GM12878 (cell line): ENCODE measurements at regions of chr10 and their contacts with region 1.

Region 1: DNA sequence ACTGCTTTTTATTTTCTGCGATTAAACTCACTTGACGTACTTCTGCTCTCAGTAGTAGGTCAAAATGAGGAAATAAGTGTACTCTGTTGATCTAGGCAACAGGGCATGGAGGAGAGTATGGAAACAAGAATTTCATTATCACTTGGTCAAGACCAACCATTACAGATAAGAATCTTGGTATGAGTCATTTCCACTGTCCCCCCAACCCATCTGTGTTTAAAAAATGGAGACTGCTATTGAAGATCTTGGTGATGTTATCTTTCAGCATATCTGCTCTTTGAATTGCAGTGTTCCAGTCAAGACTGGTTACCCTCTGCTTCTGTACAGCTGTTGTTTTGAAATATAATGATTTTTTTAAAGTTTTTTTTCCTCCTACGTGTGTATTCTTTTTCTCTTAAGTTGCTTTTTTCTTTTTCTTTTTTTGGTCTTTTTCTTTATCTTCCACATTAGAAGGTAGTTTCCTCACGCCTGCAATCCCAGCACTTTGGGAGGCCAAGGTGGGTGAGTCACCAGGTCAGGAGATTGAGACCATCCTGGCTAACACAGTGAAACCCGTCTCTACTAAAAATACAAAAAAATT is 11.7 kb downstream of the STAM start:
- DNase-seq: peak; percentile 64
- ATAC-seq: peak; percentile 92
- H3K4me3 ChIP-seq: no peak overlapping the region; the same call in 1 of the 2 replicates
- H3K27ac ChIP-seq: peak overlapping the region; percentile 49
- H3K4me1 ChIP-seq: peaks cover 11% of the 10 kb centered on the region; the same call in 1 of the 2 replicates
- H3K27me3 ChIP-seq: no peaks in the 10 kb centered on the region
- CTCF ChIP-seq: no peak
- EP300 ChIP-seq: peak; percentile 59 to 76; a peak in 2 of 4 replicates
- POLR2A ChIP-seq: no peak
- RAD21 ChIP-seq: no peak

Region 2: GRCh38 chr10:17023386-17024298 is 632.0 kb before region 1 on chr10:
- CTCF ChIA-PET with region 1: no interaction called
- POLR2A ChIA-PET with region 1: no interaction called
- RAD21 ChIA-PET with region 1: no interaction called
- SMC1A ChIA-PET with region 1: no interaction called
- in situ Hi-C with region 1: no loop called
- intact Hi-C with region 1: no loop called
- DNase-seq: peak; percentile 69
- ATAC-seq: peak; percentile 94
- H3K4me3 ChIP-seq: peak overlapping the region; percentile 12; the same call in 1 of the 2 replicates
- H3K27ac ChIP-seq: no peak overlapping the region
- H3K4me1 ChIP-seq: no peaks in the 10 kb centered on the region
- H3K27me3 ChIP-seq: no peaks in the 10 kb centered on the region; a peak in 1 of 4 replicates
- CTCF ChIP-seq: no peak
- EP300 ChIP-seq: peak; percentile 53 to 78; a peak in 3 of 4 replicates
- POLR2A ChIP-seq: no peak
- RAD21 ChIP-seq: no peak; the same call in 1 of the 2 replicates

Region 3: GRCh38 chr10:17562614-17563013 is 93.0 kb before region 1 on chr10:
- CTCF ChIA-PET with region 1: no interaction called
- POLR2A ChIA-PET with region 1: no interaction called
- RAD21 ChIA-PET with region 1: no interaction called
- SMC1A ChIA-PET with region 1: no interaction called
- in situ Hi-C with region 1: no loop called
- intact Hi-C with region 1: no loop called
- DNase-seq: no peak
- ATAC-seq: no peak
- H3K4me3 ChIP-seq: no peak overlapping the region
- H3K27ac ChIP-seq: no peak overlapping the region
- H3K4me1 ChIP-seq: peaks cover 10% of the 10 kb centered on the region
- H3K27me3 ChIP-seq: no peaks in the 10 kb centered on the region
- CTCF ChIP-seq: no peak
- EP300 ChIP-seq: no peak
- POLR2A ChIP-seq: no peak
- RAD21 ChIP-seq: no peak

Region 4: DNA sequence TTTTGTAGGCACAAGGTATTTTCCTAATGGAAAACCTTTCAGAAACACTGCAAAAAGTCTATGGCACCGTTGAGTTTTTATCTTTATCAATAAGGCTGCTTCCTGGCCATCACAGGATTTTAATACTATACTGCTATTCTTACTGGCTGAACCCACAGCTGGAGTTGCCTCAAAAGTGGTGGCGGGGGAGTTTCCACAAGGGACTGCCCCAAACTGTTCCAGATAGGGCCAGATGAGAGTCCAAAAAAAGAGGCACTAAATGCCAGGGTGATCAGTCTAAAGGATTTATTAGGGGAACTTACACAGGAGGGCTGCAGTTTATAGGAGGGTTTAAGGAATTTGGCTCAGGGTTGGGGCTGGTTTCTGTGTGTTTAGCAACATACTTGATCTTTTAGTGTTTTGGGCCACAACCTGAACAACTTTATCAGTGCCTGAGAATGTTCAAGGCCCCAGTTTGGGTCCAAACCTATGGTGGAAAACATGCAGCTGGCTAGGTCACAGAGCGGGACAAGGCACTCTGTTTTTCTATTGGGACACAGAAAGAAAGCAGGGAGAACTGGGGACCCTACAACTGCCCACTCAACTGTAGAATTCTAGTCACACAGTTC is 29.7 kb after region 1 on chr10:
- CTCF ChIA-PET with region 1: no interaction called
- POLR2A ChIA-PET with region 1: no interaction called
- RAD21 ChIA-PET with region 1: interaction called, 3 read pairs
- SMC1A ChIA-PET with region 1: interaction called, 4 read pairs
- in situ Hi-C with region 1: no loop called
- intact Hi-C with region 1: loop called (anchors 2 kb)
- DNase-seq: peak; percentile 28
- ATAC-seq: peak; percentile 89
- H3K4me3 ChIP-seq: no peak overlapping the region
- H3K27ac ChIP-seq: peak overlapping the region; percentile 83
- H3K4me1 ChIP-seq: peaks cover 12% of the 10 kb centered on the region
- H3K27me3 ChIP-seq: no peaks in the 10 kb centered on the region
- CTCF ChIP-seq: no peak
- EP300 ChIP-seq: peak in 1 of 2 experiments; percentile 50; a peak in 1 of 4 replicates
- POLR2A ChIP-seq: no peak
- RAD21 ChIP-seq: no peak